ENCODE measurements at regions of chr7 and their contacts with region 1.

Region 1: DNA sequence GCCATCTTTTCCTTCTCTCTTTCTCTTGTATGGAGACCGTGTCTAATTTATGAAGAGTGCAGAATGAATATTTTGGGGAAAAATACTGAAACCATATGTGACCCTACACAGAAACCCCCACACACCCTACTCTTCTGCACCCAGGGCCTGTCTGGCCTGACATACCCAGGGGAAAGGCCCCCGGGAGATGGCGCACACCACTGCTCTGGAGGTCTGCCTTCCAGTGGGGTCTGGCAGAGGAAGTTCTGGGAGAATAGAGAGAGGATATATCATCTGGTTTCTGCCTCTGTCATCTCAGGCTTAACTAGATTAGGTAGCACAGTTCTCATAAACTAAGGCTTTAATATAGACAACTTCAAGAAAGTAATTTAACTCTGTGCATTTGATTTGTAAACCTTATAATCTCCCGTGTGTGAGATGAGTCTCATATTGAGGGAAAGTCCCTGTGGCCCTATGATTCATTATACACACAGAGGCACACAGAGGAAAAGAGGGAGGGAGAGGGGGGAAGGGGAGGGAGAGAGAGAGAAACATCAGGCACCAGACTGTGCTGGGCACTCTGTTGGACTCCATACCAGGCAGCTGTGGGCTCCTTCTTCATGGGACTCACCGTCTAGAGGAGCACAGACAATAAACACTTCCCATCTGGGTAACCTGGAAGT is 123.3 kb downstream of the AOAH start:
- DNase-seq: peak; percentile 14
- H3K4me3 Mint-ChIP-seq: no peak overlapping the region
- H3K27ac Mint-ChIP-seq: peak overlapping the region; percentile 54
- H3K4me1 Mint-ChIP-seq: peaks cover 70% of the 10 kb centered on the region
- H3K27me3 Mint-ChIP-seq: no peaks in the 10 kb centered on the region

Region 2: DNA sequence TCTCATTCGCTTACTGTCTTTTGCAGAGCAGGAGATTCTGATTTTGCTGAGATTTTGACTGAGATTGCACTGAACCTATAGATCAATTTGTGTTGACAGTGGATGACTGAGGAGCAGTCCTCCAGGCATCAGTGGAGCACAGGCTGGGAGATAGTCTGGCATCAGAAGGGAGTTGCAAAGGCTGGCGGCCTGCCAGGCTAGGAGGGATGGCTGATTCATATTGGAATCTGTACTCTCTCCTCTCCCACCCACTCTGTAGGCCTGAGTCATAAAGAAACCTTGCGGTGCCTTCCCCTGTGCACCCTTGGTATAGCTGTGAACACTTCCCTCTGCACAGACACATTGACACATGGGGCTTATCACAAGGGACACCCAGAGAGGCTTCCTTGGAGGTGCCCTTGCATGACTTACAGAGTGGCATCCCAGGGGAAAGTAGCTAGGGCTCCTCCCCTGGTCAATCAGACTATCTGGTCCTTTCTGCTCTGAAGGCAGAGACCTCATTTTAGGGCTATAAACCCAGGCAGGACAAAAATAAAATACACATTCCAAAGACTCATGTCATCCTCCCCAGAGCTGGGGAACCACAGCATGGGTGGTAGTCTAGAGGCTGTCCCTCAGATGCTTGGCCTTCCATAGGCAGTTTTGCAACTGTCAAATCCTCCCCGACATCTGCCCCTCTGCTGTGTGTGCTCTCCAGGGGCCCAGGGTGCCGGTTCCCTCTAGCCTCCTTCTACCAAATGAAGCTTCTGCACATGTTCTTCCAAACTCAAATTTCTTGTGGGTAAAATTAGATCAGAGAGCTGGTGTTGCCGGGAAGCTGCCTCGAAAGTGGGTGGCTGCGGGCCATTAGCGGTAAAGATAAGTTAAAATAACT is 485.3 kb before region 1 on chr7:
- intact Hi-C with region 1: loop called (anchors 5 kb)
- DNase-seq: peak; percentile 60
- H3K4me3 Mint-ChIP-seq: peak overlapping the region; percentile 32
- H3K27ac Mint-ChIP-seq: peak overlapping the region; percentile 61
- H3K4me1 Mint-ChIP-seq: peaks cover 33% of the 10 kb centered on the region
- H3K27me3 Mint-ChIP-seq: peaks cover 26% of the 10 kb centered on the region

Region 3: GRCh38 chr7:36583318-36583717 is 17.7 kb before region 1 on chr7:
- intact Hi-C with region 1: loop called (anchors 1 kb)
- DNase-seq: no peak
- H3K4me3 Mint-ChIP-seq: no peak overlapping the region
- H3K27ac Mint-ChIP-seq: no peak overlapping the region
- H3K4me1 Mint-ChIP-seq: peaks cover 12% of the 10 kb centered on the region
- H3K27me3 Mint-ChIP-seq: peaks cover 1% of the 10 kb centered on the region

Region 4: DNA sequence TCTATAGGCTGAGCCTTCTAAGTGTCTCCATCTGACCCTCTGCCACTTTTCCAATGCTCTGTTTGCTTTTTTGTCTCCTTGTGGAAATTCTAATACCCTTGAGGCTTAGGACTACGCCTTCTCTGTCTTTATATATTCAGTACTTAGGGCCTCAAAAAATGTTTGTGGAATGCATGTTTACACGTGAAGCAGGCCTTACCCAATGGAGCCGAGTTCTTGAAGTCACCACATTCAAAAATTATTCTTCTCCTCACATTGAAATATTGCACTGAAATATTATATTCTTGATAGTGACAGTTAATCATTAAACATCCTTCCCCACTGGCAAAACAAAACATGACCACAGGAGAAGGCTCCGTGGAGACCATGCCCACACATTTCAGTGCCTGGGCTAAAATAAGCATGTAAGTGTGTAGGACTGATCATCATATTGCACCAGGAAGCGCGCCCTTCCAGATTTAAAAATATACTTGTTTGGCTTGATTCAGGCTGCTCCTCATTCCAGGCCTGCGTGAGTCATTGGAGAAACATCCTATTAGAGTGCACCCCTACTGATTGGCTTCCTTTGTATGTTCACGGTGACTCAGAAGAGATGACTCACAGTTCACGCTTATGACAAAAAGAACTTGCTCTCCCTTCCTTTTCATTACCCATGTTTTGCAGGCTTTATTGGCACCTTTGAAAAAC is 430.7 kb after region 1 on chr7:
- intact Hi-C with region 1: loop called (anchors 5 kb)
- DNase-seq: peak; percentile 19
- H3K4me3 Mint-ChIP-seq: no peak overlapping the region
- H3K27ac Mint-ChIP-seq: peak overlapping the region; percentile 69
- H3K4me1 Mint-ChIP-seq: peaks cover 59% of the 10 kb centered on the region
- H3K27me3 Mint-ChIP-seq: no peaks in the 10 kb centered on the region

Region 5: GRCh38 chr7:37074370-37074769 is 473.4 kb after region 1 on chr7:
- intact Hi-C with region 1: loop called (anchors 2 kb)
- DNase-seq: no peak
- H3K4me3 Mint-ChIP-seq: no peak overlapping the region
- H3K27ac Mint-ChIP-seq: no peak overlapping the region
- H3K4me1 Mint-ChIP-seq: peaks cover 46% of the 10 kb centered on the region
- H3K27me3 Mint-ChIP-seq: no peaks in the 10 kb centered on the region